Right ventricle myocardium inferior (tissue), 1 donor: ENCODE measurements at regions of chr7 and their contacts with region 1.

Region 1: GRCh38 chr7:91089382-91089963 is 174.8 kb upstream of the FZD1 start:
- DNase-seq: no peak
- ATAC-seq: peak; percentile 58

Region 2: DNA sequence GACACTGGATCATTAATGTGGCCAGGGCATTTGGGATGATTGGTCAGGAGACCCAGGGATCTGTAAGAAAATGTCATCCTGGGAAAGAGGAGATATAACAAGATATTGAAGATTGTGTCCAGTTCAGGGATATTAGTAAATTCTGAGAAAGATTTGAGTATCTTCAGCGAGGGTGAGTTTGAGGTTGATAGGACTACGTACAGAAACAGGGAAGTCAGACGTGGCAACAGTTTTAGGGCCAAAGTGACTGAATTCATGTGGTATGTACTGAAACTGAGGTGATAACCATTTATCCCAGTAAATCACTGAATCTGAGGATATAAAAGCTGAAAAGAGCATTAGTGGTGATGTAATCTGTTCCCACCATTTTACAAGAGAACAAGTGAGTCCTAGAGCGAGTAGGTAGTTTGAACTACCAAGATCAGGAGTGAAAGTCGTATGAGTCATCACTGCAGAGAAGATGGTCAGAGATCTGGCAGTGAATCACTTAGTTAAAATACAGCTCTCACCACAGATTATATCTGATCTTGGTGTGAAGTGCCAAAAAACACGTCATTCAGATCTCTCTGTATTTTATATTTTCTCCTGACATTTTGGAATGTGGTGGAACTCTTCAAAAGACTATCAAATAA is 272.8 kb before region 1 on chr7:
- intact Hi-C with region 1: no loop called
- DNase-seq: no peak
- ATAC-seq: peak; percentile 44

Region 3: GRCh38 chr7:91112902-91113341 is 23.4 kb after region 1 on chr7:
- intact Hi-C with region 1: no loop called
- DNase-seq: no peak
- ATAC-seq: no peak

Region 4: GRCh38 chr7:91264046-91264923 is 174.8 kb after region 1 on chr7 and contains the start of gene FZD1:
- intact Hi-C with region 1: loop called (anchors 5 kb)
- DNase-seq: peak; percentile 97
- ATAC-seq: peak; percentile 98
- total RNA-seq, gene FZD1: 10.3 TPM

Region 5: DNA sequence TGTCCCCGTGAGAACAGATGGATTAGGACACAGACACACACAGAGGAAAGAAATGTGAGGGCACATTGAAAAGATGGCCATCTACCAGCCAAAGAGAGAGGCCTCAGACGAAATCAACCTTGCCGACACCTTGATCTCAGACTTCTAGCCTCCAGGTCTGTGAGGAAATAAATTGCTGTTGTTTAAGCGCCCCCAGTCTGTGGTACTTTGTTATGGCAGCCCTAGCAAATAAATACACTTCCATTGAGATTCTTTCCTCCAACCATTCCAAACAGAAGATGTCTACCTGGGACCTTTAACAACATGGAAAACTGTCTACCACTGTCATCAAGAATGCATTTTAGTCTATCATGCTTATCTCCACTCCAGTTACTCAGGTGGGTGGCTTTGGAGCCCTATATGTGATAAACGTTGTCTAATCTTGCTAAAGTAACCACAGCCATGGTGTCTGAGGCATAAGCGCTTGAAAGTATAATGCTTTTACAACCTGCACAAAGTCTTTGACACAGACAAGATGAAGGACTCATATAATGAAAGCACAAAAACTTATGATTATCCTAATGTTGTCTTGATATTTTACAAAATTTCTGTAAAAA is 546.8 kb after region 1 on chr7:
- intact Hi-C with region 1: loop called (anchors 5 kb)
- DNase-seq: no peak
- ATAC-seq: no peak

Region 6: DNA sequence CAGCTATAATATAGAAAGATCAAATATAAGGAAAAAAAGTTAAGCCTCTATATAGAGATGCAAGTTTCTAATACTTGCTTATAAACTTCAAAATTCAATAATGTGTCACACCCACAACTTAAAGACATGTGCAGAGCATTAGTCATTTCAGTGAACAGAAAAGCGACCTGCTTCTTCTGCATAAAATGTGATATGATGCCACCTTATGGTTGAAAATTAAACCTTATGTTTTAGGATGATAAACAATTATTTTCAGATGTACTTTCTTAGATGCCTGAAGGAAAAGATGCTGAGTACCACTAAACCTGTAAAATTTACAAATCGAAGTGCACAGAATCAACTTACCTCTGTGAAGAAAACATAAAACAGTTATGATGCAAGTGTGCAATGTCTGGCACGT is 695.0 kb after region 1 on chr7:
- intact Hi-C with region 1: loop called (anchors 5 kb)
- DNase-seq: no peak
- ATAC-seq: no peak